ENCODE measurements at regions of chr5 and their contacts with region 1.

Region 1: DNA sequence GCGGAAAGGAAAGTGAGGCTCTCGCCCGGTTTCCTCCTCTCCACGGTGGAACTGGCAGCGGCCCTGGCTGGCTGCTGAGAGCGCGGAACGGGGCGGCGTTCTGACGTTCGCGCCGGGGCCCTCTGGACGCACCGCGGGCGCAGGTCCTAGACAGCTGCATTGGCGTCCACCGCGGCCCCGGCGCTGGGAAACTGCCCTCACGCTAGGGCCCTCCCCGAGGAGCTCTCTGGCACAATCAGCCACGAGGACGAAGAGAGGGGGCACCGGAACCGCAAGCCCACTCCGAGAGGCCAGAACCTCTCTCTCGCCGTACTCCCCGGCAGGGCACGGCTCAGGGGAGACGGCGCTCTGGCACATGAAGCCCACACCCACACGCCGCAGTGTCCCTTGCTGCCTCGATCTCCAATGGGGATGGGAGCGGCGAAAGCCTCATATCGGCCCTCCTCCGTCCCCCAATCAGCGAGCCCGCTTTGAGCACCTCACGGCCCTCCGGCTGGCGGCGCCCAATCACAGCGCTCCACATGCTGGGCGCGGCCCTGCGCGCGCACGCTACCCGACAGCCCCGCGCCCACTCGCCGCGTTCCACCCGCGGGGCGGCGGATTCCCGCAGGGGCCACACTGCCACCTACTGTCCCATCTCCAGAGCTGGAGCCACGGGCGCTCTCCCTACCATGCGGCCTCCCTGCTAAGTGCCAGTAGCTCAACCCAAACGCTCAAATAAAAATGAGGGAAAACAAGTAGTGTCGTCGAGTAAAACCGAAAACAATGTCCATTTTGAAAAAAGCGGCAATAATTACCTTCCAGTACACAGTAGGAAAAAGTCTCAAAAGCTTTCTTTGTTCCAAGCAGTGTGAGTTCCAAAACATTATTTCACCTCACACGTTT is 11.8 kb downstream of the MRPS27 start:
- DNase-seq: peak; percentile 96
- CTCF ChIP-seq: peak; percentile 92

Region 2: GRCh38 chr5:71782771-71783770 is 525.1 kb before region 1 on chr5:
- CTCF ChIA-PET with region 1: interaction called, 11 read pairs
- POLR2A ChIA-PET with region 1: no interaction called
- DNase-seq: peak; percentile 71
- CTCF ChIP-seq: peak; percentile 60

Region 3: DNA sequence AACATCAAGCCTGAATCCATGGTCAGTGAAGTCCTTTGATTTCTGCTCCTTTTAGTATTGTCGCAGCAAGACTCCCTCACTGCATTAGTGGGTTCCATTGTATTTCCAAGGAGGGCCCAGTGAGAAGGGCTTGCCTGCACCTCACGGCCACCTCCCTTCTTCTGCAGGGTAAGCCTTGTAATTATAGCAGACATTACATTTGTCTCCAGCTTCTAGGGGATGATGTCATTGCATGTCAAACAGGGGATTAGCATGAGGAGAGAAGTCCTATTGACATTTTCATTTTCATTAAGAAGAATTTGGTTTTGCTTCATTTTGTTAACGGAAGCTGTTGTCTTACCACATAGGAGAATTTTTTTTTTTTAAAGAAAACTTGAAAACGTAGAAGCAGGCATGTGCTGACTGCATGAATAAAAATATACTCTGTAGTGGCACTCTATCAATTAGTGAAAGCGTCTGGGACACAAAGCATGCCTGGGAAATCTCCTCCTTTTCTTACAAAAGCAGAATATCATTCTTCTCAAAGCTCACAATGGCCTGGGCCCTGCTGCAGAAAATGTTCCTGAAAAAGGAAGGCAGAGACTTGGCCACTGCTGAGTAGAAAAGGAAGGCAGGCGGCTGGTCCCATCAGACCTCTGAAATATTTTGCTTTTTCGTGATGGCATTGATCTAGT is 173.8 kb before region 1 on chr5:
- CTCF ChIA-PET with region 1: interaction called, 13 read pairs
- POLR2A ChIA-PET with region 1: no interaction called
- DNase-seq: no peak
- CTCF ChIP-seq: no peak

Region 4: GRCh38 chr5:72280581-72281170 is 27.5 kb before region 1 on chr5:
- CTCF ChIA-PET with region 1: interaction called, 17 read pairs
- POLR2A ChIA-PET with region 1: no interaction called
- DNase-seq: peak; percentile 19
- CTCF ChIP-seq: peak; percentile 35

Region 5: GRCh38 chr5:72288924-72289323 is 19.3 kb before region 1 on chr5:
- CTCF ChIA-PET with region 1: interaction called, 17 read pairs
- POLR2A ChIA-PET with region 1: interaction called, 9 read pairs
- DNase-seq: no peak
- CTCF ChIP-seq: no peak

Region 6: DNA sequence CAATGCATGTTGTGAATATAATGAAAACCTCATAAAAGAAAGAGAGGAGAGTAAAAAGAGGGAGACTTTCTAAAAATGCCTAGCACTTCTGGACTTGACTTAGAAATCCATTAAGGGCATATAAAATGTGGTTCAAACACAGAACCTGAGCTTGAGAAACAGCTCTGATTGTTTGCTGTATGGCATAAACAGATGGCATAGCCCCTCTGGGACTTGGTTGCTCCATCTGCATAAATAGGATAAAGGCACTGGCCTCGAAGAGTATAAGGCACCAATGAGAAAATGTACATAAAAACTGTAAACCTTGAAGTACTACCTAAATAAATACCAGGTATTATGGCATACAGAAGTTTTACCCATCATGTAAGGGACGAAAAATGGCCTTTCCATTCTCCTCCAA is 12.0 kb before region 1 on chr5:
- CTCF ChIA-PET with region 1: interaction called, 37 read pairs
- POLR2A ChIA-PET with region 1: interaction called, 9 read pairs
- DNase-seq: no peak
- CTCF ChIP-seq: no peak

Region 7: GRCh38 chr5:72319976-72320752 is 12.0 kb after region 1 on chr5 and contains the starts of genes MRPS27 and PTCD2:
- CTCF ChIA-PET with region 1: interaction called, 77 read pairs
- POLR2A ChIA-PET with region 1: interaction called, 8 read pairs
- DNase-seq: peak; percentile 99
- CTCF ChIP-seq: peak; percentile 43

Region 8: GRCh38 chr5:72720205-72720604 is 412.0 kb after region 1 on chr5:
- CTCF ChIA-PET with region 1: no interaction called
- POLR2A ChIA-PET with region 1: no interaction called
- DNase-seq: no peak
- CTCF ChIP-seq: no peak